ENCODE measurements at regions of chr10 and their contacts with region 1.

Region 1: GRCh38 chr10:70925377-70926225 is 37.2 kb upstream of the PCBD1 start:
- DNase-seq: peak; percentile 81
- CTCF ChIP-seq: peak; percentile 93

Region 2: GRCh38 chr10:70634011-70634410 is 291.6 kb before region 1 on chr10:
- in situ Hi-C with region 1: no loop called
- DNase-seq: no peak
- CTCF ChIP-seq: no peak

Region 3: GRCh38 chr10:71010730-71011129 is 85.1 kb after region 1 on chr10:
- in situ Hi-C with region 1: no loop called
- DNase-seq: no peak
- CTCF ChIP-seq: no peak

Region 4: GRCh38 chr10:71209352-71209715 is 283.7 kb after region 1 on chr10:
- in situ Hi-C with region 1: loop called (anchors 10 kb)
- DNase-seq: no peak
- CTCF ChIP-seq: no peak

Measured in GM13977 (cell line).